ENCODE measurements at regions of chr19 and their contacts with region 1.

Region 1: GRCh38 chr19:58182989-58183816 is at the start of gene ZNF274:
- DNase-seq: peak; percentile 98
- H3K4me3 Mint-ChIP-seq: peak within 1 kb of the TSS; percentile 98
- H3K27ac Mint-ChIP-seq: peak within 1 kb of the TSS; percentile 98
- H3K4me1 Mint-ChIP-seq: peaks cover 14% of the 10 kb centered on the region
- H3K27me3 Mint-ChIP-seq: no peaks in the 10 kb centered on the region
- CTCF ChIP-seq: no peak
- total RNA-seq, gene ZNF274: 43.2 and 44.6 TPM in 2 replicates

Region 2: GRCh38 chr19:58305065-58305931 is 122.1 kb after region 1 on chr19 and contains the start of gene ERVK3-1:
- CTCF ChIA-PET with region 1: no interaction called
- intact Hi-C with region 1: loop called (anchors 2 kb)
- DNase-seq: peak; percentile 96
- H3K4me3 Mint-ChIP-seq: peak within 1 kb of the TSS; percentile 99
- H3K27ac Mint-ChIP-seq: peak within 1 kb of the TSS; percentile 96
- H3K4me1 Mint-ChIP-seq: peaks cover 21% of the 10 kb centered on the region
- H3K27me3 Mint-ChIP-seq: no peaks in the 10 kb centered on the region
- CTCF ChIP-seq: no peak
- total RNA-seq, gene ERVK3-1: 68.4 and 70.8 TPM in 2 replicates

Region 3: GRCh38 chr19:58326914-58327726 is 143.9 kb after region 1 on chr19 and contains the start of gene ZSCAN22:
- CTCF ChIA-PET with region 1: no interaction called
- intact Hi-C with region 1: loop called (anchors 1 kb)
- DNase-seq: peak; percentile 97
- H3K4me3 Mint-ChIP-seq: no peak within 1 kb of the TSS
- H3K27ac Mint-ChIP-seq: no peak within 1 kb of the TSS
- H3K4me1 Mint-ChIP-seq: peaks cover 16% of the 10 kb centered on the region
- H3K27me3 Mint-ChIP-seq: no peaks in the 10 kb centered on the region
- CTCF ChIP-seq: no peak
- total RNA-seq, gene ZSCAN22: 4.6 TPM in 2 replicates

Region 4: DNA sequence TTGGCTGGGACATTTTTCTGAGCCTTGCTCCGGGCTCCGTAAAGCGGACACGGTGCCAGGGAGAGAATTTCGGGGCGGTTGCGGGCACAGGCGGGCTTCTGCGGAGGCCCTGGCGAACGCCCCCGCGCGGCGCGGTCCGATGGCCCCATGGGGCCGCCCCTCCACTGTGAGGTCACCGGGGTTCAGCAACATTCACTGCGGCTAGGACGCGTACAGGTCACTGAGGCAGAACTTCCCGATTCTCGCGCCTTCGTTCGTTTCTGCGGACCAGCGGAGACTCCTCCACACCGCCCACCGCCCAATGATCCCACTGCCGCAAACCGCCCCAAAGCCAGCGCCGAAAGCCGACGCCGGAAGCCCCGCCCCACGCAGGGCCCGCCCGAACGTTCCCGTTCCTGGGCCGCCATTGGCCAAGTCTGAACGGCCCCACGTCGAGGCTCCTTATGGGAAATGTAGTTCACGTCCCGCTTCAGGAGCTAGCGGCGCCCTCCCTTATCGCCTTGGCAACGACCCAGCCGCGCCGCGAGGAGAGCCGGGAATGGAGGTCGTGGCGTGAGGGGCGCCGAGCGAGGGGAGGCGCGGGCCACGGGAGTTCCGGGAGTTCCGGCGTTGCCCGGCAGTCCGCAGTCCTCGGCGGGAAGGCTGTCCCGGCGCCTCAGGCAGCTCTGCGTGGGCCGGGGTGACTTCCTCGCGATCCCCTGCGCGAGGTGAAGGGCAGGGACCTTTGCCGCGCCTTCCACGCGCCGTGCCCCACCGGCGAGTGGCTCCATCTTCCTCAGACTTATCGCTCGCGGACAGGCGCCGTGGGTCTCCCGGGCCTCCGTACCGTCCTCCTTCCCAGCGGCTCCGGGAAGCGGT is 225.2 kb after region 1 on chr19 and contains the start of gene ZNF584:
- CTCF ChIA-PET with region 1: no interaction called
- intact Hi-C with region 1: loop called (anchors 10 kb)
- DNase-seq: peak; percentile 97
- H3K4me3 Mint-ChIP-seq: peak within 1 kb of the TSS; percentile 83
- H3K27ac Mint-ChIP-seq: peak within 1 kb of the TSS; percentile 92
- H3K4me1 Mint-ChIP-seq: peaks cover 36% of the 10 kb centered on the region
- H3K27me3 Mint-ChIP-seq: no peaks in the 10 kb centered on the region
- CTCF ChIP-seq: no peak
- total RNA-seq, gene ZNF584: 21.8 and 23.4 TPM in 2 replicates

Measured in Calu3 (cell line).